ENCODE measurements at regions of chr1 and their contacts with region 1.

Region 1: GRCh38 chr1:224503161-224504118 is 68.8 kb upstream of the WDR26 start:
- DNase-seq: peak; percentile 42
- H3K4me3 ChIP-seq: peak overlapping the region in 3 of 4 donors; percentile 3 to 13 (median 4)
- H3K27ac ChIP-seq: peak overlapping the region; percentile 83 to 93 (median 92)
- H3K4me1 ChIP-seq: peaks cover 41 to 91% (median 67%) of the 10 kb centered on the region in 3 donors
- H3K27me3 ChIP-seq: no peaks in the 10 kb centered on the region
- CTCF ChIP-seq: peak in 4 of 6 experiments; percentile 4 to 43 (median 20)
- POLR2A ChIP-seq: no peak

Region 2: GRCh38 chr1:224273641-224274040 is 229.8 kb before region 1 on chr1:
- intact Hi-C with region 1: no loop called
- DNase-seq: no peak
- H3K4me3 ChIP-seq: no peak overlapping the region
- H3K27ac ChIP-seq: no peak overlapping the region
- H3K4me1 ChIP-seq: no peaks in the 10 kb centered on the region
- H3K27me3 ChIP-seq: no peaks in the 10 kb centered on the region
- CTCF ChIP-seq: no peak
- POLR2A ChIP-seq: no peak

Region 3: DNA sequence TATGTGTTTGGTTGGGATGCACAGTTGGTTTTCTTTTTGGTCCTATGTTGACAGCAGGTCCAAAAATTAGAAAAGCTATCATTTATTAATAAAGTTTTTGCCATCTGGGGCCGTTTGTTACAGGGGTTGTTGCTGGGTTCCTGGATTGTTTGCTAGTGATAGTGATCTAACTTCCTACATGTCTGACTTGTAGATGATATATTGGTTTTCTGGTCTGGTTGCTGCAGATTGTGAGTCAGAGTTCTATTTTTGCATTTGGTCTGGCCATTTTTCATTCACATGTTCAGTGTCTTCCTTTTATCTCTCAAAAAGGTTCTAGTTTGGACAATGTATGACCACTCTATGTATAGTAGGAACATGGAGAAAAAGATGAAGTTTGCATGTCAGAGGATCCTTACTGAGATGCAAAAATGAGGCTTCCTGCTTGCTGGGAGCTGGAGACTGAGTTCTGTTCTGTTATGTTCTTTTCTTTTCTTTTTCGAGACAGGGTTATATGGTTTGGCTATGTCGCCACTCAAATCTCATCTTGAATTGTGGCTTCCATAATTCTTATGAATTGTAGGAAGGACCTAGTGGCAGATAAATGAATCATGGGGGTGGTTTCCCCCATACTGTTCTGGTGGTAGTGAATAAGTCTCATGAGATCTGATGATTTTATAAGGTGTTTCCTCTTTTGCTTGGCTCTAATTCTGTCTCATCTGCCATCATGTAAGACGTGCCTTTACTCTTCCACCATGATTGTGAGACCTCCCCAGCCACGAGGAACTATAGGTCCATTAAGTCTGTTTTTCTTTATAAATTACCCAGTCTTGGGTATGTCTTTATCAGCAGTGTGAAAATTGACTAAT is 169.3 kb before region 1 on chr1:
- intact Hi-C with region 1: no loop called
- DNase-seq: no peak
- H3K4me3 ChIP-seq: no peak overlapping the region
- H3K27ac ChIP-seq: no peak overlapping the region
- H3K4me1 ChIP-seq: peaks cover 4 to 19% (median 8%) of the 10 kb centered on the region in 3 donors
- H3K27me3 ChIP-seq: peaks cover 0 to 4% (median 0%) of the 10 kb centered on the region in 4 donors
- CTCF ChIP-seq: no peak
- POLR2A ChIP-seq: no peak

Region 4: GRCh38 chr1:224434691-224435317 is 68.6 kb before region 1 on chr1 and contains the start of gene WDR26:
- intact Hi-C with region 1: loop called (anchors 10 kb)
- DNase-seq: peak; percentile 49
- H3K4me3 ChIP-seq: peak within 1 kb of the TSS; percentile 85 to 98 (median 91)
- H3K27ac ChIP-seq: peak within 1 kb of the TSS; percentile 96 to 99 (median 98)
- H3K4me1 ChIP-seq: peaks cover 6 to 56% (median 34%) of the 10 kb centered on the region in 3 donors
- H3K27me3 ChIP-seq: no peaks in the 10 kb centered on the region
- CTCF ChIP-seq: peak in 1 of 6 experiments; percentile 18
- POLR2A ChIP-seq: peak in 2 of 4 donors; percentile 57 to 88
- total RNA-seq, gene WDR26: 38.3 to 111 (median 61.9) TPM

Measured in esophagus squamous epithelium (tissue), 5 donors.